ENCODE measurements at regions of chr6 and their contacts with region 1.

Region 1: GRCh38 chr6:116680975-116681808 is at the start of gene KPNA5:
- DNase-seq: peak; percentile 96
- ATAC-seq: peak; percentile 96
- H3K4me3 Mint-ChIP-seq: peak within 1 kb of the TSS; percentile 98
- H3K27ac Mint-ChIP-seq: peak within 1 kb of the TSS; percentile 99
- H3K4me1 Mint-ChIP-seq: peaks cover 31% of the 10 kb centered on the region
- H3K27me3 Mint-ChIP-seq: no peaks in the 10 kb centered on the region
- total RNA-seq, gene KPNA5: 10.4 to 13.6 TPM

Region 2: GRCh38 chr6:116667623-116668022 is 13.6 kb before region 1 on chr6:
- CTCF ChIA-PET with region 1: interaction called, 4 read pairs
- POLR2A ChIA-PET with region 1: interaction called, 4 read pairs
- intact Hi-C with region 1: loop called (anchors 1 kb)
- DNase-seq: no peak
- ATAC-seq: no peak
- H3K4me3 Mint-ChIP-seq: peak overlapping the region; percentile 89
- H3K27ac Mint-ChIP-seq: peak overlapping the region; percentile 96
- H3K4me1 Mint-ChIP-seq: peaks cover 38% of the 10 kb centered on the region
- H3K27me3 Mint-ChIP-seq: no peaks in the 10 kb centered on the region

Region 3: DNA sequence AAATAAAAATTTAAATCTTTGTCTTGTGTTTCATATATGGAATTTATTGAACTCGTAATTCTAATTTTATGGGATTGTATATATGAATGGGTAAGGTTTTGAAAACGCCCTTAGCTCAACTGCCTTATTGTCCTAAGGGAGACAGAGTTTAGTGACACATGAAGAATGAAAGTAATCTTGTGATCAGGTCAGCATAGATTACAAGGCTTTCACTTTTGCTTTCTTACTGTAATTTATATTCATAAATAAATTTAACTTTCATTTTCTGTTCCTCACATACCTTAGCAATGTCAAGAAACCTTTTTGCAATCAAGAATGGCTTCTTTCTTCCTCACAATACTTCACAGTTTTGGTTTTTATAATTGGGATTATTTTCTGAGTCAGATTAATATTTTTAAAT is 14.2 kb after region 1 on chr6:
- CTCF ChIA-PET with region 1: interaction called, 3 read pairs
- POLR2A ChIA-PET with region 1: no interaction called
- intact Hi-C with region 1: loop called in 1 of 2 experiments (anchors 1 kb)
- DNase-seq: no peak
- ATAC-seq: peak; percentile 78
- H3K4me3 Mint-ChIP-seq: no peak overlapping the region
- H3K27ac Mint-ChIP-seq: no peak overlapping the region
- H3K4me1 Mint-ChIP-seq: peaks cover 39% of the 10 kb centered on the region
- H3K27me3 Mint-ChIP-seq: no peaks in the 10 kb centered on the region

Region 4: GRCh38 chr6:117338567-117338966 is 657.4 kb after region 1 on chr6:
- CTCF ChIA-PET with region 1: no interaction called
- POLR2A ChIA-PET with region 1: no interaction called
- intact Hi-C with region 1: no loop called
- DNase-seq: no peak
- ATAC-seq: no peak
- H3K4me3 Mint-ChIP-seq: no peak overlapping the region
- H3K27ac Mint-ChIP-seq: no peak overlapping the region
- H3K4me1 Mint-ChIP-seq: no peaks in the 10 kb centered on the region
- H3K27me3 Mint-ChIP-seq: peaks cover 14% of the 10 kb centered on the region

Measured in activated CD4-positive, alpha-beta T cell treated with anti-CD3 and anti-CD28 coated beads for 36 hours (primary cell).